Testis (tissue), 5 donors: ENCODE measurements at regions of chr6 and their contacts with region 1.

Region 1: GRCh38 chr6:111709615-111710398 is 104.1 kb upstream of the TRAF3IP2 start:
- DNase-seq: peak; percentile 72
- H3K4me3 ChIP-seq: no peak overlapping the region
- H3K27ac ChIP-seq: peak overlapping the region; percentile 50 to 52
- H3K4me1 ChIP-seq: peaks cover 12% of the 10 kb centered on the region
- H3K27me3 ChIP-seq: no peaks in the 10 kb centered on the region
- CTCF ChIP-seq: peak; percentile 80 to 86 (median 84)
- POLR2A ChIP-seq: no peak

Region 2: GRCh38 chr6:111997078-111997852 is 287.5 kb after region 1 on chr6:
- intact Hi-C with region 1: loop called (anchors 5 kb)
- DNase-seq: peak; percentile 90
- H3K4me3 ChIP-seq: peak overlapping the region; percentile 1 to 29
- H3K27ac ChIP-seq: peak overlapping the region in 1 of 2 donors; percentile 25
- H3K4me1 ChIP-seq: no peaks in the 10 kb centered on the region
- H3K27me3 ChIP-seq: no peaks in the 10 kb centered on the region
- CTCF ChIP-seq: peak; percentile 78 to 88 (median 85)
- POLR2A ChIP-seq: no peak

Region 3: GRCh38 chr6:112237595-112237994 is 527.8 kb after region 1 on chr6:
- intact Hi-C with region 1: no loop called
- DNase-seq: peak; percentile 36
- H3K4me3 ChIP-seq: no peak overlapping the region
- H3K27ac ChIP-seq: peak overlapping the region in 1 of 2 donors; percentile 62
- H3K4me1 ChIP-seq: peaks cover 13% of the 10 kb centered on the region
- H3K27me3 ChIP-seq: no peaks in the 10 kb centered on the region
- CTCF ChIP-seq: no peak
- POLR2A ChIP-seq: no peak